PC-3 (cell line): ENCODE measurements at regions of chr11 and their contacts with region 1.

Region 1: GRCh38 chr11:110311783-110312579 is 15.6 kb upstream of the RDX start:
- DNase-seq: peak; percentile 63
- ATAC-seq: peak; percentile 39
- H3K4me3 ChIP-seq: no peak overlapping the region
- H3K27ac ChIP-seq: peak overlapping the region; percentile 80
- H3K4me1 ChIP-seq: peaks cover 19% of the 10 kb centered on the region
- H3K27me3 ChIP-seq: no peaks in the 10 kb centered on the region
- CTCF ChIP-seq: no peak

Region 2: DNA sequence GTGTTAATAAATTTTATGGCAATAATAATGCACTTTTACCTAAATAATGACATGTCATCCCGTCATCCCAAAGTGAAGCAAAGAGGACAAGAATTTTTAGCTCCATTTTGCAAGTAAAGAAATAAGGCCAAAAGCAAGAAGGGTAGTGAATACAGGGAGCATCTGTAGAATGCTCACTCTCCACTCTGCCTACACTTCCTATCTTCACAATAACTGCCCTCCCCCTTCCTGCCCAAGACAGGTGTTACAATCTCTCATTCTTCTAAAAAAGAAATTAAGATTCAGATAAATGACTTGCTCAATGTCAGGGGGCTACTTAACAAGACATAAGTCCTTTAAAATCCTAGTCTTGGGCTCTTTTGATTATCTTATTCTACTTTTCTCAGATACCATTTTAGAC is 24.4 kb before region 1 on chr11:
- CTCF ChIA-PET with region 1: no interaction called
- POLR2A ChIA-PET with region 1: interaction called, 14 read pairs
- intact Hi-C with region 1: no loop called
- DNase-seq: no peak
- ATAC-seq: no peak
- H3K4me3 ChIP-seq: no peak overlapping the region
- H3K27ac ChIP-seq: no peak overlapping the region
- H3K4me1 ChIP-seq: no peaks in the 10 kb centered on the region
- H3K27me3 ChIP-seq: no peaks in the 10 kb centered on the region
- CTCF ChIP-seq: no peak